ENCODE measurements at regions of chr11 and their contacts with region 1.

Region 1: GRCh38 chr11:48109046-48109666 is 107.5 kb upstream of the OR4B1 start:
- DNase-seq: no peak
- H3K4me3 ChIP-seq: no peak overlapping the region; the same call in 1 of the 2 replicates
- H3K27me3 ChIP-seq: no peaks in the 10 kb centered on the region
- CTCF ChIP-seq: peak; percentile 44

Region 2: DNA sequence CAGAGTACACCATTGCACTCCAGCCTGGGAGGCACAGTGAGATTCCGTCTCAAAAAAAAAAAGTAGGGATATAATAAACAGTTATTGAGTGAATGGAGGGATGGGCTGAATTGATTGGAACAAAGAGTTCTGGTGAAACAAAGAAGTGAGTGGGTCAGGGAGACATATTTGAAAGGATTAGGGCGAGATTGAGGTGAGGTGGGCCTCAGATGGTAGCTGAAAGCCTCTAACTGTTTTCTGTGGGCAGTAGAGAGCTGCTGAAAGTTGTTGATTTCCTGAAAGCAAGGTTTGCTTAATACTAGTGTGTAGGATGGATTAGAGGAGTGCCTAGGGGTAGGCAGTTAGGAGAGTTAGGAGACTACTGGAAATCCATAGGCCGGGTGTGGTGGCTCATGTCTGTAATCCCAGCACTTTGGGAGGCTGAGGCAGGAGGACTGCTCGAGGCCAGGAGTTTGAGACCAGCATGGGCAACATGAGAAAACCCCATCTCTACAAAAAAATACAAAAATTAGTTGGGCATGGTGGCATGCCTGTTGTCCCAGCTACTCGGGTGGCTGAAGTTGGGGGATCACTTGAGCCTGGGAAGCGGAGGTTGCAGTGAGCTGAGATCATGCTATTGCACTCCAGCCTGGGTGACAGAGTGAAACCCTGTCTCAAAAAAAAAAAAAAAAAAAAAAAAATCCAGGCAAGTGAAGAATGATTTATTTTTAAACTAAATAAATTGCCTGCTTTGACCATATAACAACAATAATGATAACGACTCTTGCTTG is 170.2 kb before region 1 on chr11:
- CTCF ChIA-PET with region 1: interaction called, 171 read pairs
- POLR2A ChIA-PET with region 1: interaction called, 7 read pairs
- DNase-seq: no peak
- H3K4me3 ChIP-seq: no peak overlapping the region
- H3K27me3 ChIP-seq: no peaks in the 10 kb centered on the region
- CTCF ChIP-seq: no peak

Measured in BJ (cell line).